Ovary (tissue), 10 donors: ENCODE measurements at regions of chr18 and their contacts with region 1.

Region 1: GRCh38 chr18:2655178-2655953 is at the start of gene SMCHD1:
- DNase-seq: peak; percentile 81 to 90 (median 87)
- H3K4me3 ChIP-seq: peak within 1 kb of the TSS; percentile 96
- H3K27ac ChIP-seq: peak within 1 kb of the TSS; percentile 98 to 99
- H3K4me1 ChIP-seq: peaks cover 7% of the 10 kb centered on the region
- H3K27me3 ChIP-seq: no peaks in the 10 kb centered on the region
- CTCF ChIP-seq: no peak
- EP300 ChIP-seq: no peak
- POLR2A ChIP-seq: peak; percentile 85
- total RNA-seq, gene SMCHD1: 43.4 to 82.7 (median 58.1) TPM

Region 2: GRCh38 chr18:2571200-2572143 is 83.9 kb before region 1 on chr18 and contains the starts of genes METTL4 and NDC80:
- intact Hi-C with region 1: loop called in 1 of 4 experiments (anchors 10 kb)
- DNase-seq: peak; percentile 75 to 90 (median 85)
- H3K4me3 ChIP-seq: peak within 1 kb of the TSS; percentile 75
- H3K27ac ChIP-seq: peak within 1 kb of the TSS; percentile 82 to 95
- H3K4me1 ChIP-seq: peaks cover 5% of the 10 kb centered on the region
- H3K27me3 ChIP-seq: no peaks in the 10 kb centered on the region
- CTCF ChIP-seq: no peak
- EP300 ChIP-seq: no peak
- POLR2A ChIP-seq: peak; percentile 45
- total RNA-seq, gene METTL4: 4.8 to 16.0 (median 8.7) TPM
- total RNA-seq, gene NDC80: 0.13 to 1.6 (median 0.34) TPM in 5 of 7 donors, not detected in the others

Region 3: GRCh38 chr18:2903006-2903405 is 247.6 kb after region 1 on chr18:
- intact Hi-C with region 1: no loop called
- DNase-seq: peak; percentile 83 to 89 (median 87)
- H3K4me3 ChIP-seq: no peak overlapping the region
- H3K27ac ChIP-seq: peak overlapping the region; percentile 66 to 88
- H3K4me1 ChIP-seq: peaks cover 11% of the 10 kb centered on the region
- H3K27me3 ChIP-seq: no peaks in the 10 kb centered on the region
- CTCF ChIP-seq: no peak
- EP300 ChIP-seq: no peak
- POLR2A ChIP-seq: peak; percentile 19